ENCODE measurements at regions of chr1 and their contacts with region 1.

Region 1: DNA sequence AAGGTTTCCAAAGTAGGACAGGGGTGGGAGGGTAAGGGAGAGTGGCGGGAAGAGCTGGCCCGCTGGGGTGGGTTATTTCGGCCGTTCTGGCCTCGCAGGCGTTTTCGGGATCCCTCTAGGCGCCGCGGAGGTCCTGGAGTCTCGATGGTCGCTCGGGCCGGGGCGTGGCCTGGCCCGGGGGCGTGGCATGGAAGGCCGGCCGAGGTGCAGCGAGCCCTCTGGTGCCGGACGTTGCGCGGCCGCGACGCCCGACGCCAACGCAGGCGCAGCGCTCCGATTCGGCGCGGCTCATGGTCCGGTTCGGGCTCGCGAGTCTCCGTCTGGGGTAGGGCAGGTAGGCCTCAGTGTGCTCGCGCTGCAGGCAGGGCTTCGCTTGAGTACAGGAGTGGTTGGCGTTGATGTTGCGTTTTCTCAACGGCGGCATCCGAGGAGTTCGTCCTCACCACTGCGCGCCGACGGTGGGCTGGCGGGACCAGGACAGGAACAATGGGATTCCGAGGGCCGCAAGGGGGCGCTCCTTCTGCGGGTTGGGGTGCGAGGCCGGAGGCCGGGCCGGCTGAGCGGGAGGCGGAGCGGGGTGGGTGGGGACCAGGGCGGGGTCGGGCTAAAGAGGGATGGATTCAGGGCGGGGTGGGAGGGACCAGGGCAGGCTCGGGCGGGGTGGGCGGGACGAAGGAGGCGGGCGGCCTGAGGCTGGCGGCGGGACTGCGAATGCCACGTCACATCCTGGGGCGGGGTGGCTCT is at the start of gene PGBD2:
- DNase-seq: peak; percentile 95 to 98
- ATAC-seq: peak; percentile 99
- H3K4me3 ChIP-seq: peak within 1 kb of the TSS; percentile 44 to 61
- H3K27ac ChIP-seq: peak within 1 kb of the TSS in 1 of 2 donors; percentile 72
- H3K4me1 ChIP-seq: peaks cover 0 to 2% of the 10 kb centered on the region in 2 donors
- H3K27me3 ChIP-seq: no peaks in the 10 kb centered on the region
- total RNA-seq, gene PGBD2: 5.3 to 6.7 TPM

Region 2: DNA sequence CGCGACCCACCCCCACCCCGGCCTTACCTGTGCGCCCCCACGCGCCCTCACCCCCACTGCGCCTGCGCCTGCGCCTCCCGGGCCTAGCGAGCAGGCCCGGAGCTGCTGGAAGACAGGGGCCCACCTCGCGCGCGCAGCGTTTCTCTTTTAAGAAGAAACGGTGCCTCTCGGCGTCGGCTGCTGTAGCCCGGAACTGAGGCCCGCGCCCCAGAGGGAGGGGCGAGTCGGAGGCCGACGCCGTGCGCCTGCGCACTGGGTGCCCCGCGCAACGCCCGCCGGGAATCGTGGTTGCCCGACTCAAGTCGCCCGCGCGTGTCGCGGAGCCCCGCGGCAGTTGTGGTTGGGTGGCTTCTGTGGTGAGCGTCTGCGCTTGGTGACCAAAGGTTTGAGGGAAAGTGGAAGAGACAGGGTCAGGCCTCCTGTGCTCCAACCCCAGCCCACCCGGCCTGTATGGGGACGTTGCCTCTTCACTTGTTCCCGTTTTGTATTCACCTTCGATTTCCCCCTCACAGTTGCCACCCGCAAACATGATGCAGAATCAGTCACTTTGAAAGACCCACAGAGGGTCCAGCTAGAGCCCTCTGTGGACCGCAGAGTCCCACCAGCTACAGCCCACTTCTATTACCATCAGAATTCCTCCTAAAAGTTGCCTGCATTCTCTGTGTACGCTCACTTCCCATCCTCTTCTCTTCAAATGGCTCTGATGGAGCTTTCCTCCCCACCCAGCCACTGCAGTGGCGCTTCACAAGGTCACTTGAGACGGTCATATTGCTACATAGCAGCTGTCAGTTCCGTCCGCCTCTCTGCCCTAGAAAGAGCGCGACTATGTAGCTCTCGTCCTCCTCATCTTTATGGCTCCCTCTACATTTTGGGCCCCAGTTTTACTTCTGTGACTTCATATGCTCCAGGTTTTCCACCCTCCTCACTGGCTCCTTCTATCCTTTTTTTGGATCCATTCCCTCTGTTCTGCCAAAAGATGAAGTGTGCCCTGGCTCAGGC is 47.0 kb before region 1 on chr1 and contains the start of gene ZNF692:
- intact Hi-C with region 1: loop called in 1 of 2 experiments (anchors 2 kb)
- DNase-seq: peak; percentile 99
- ATAC-seq: peak; percentile 96
- H3K4me3 ChIP-seq: peak within 1 kb of the TSS; percentile 39 to 59
- H3K27ac ChIP-seq: peak within 1 kb of the TSS in 1 of 2 donors; percentile 77
- H3K4me1 ChIP-seq: peaks cover 0 to 3% of the 10 kb centered on the region in 2 donors
- H3K27me3 ChIP-seq: no peaks in the 10 kb centered on the region
- total RNA-seq, gene ZNF692: 20.7 to 41.3 TPM

Region 3: DNA sequence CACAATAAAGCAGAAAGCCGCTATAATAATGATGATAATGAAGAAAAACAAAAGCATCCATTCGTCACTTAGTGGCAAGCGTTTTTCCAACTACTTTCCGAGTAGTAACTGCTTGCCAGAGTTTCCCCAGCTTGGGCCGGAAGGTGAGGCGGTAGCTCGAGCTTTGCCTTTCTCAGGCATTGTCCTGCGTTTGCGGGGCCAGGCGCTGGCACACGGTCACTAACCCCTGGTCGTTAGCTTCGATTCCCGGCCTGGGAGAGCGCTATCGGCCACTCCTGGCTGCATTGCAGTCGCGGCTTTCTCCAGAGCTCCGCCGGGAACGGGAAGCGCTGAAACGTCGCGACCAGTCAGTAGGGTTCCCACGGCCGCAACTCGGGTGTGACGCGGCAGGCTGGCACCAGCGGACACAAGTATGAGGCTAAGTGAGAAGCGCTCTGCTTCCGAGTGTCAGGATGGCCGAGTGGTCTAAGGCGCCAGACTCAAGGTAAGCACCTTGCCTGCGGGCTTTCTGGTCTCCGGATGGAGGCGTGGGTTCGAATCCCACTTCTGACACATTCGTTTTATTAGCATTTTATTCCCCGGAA is 32.7 kb before region 1 on chr1:
- intact Hi-C with region 1: loop called in 1 of 2 experiments (anchors 2 kb)
- DNase-seq: peak; percentile 94 to 98
- ATAC-seq: peak; percentile 98
- H3K4me3 ChIP-seq: peak overlapping the region; percentile 28 to 49
- H3K27ac ChIP-seq: peak overlapping the region; percentile 74 to 94
- H3K4me1 ChIP-seq: no peaks in the 10 kb centered on the region
- H3K27me3 ChIP-seq: no peaks in the 10 kb centered on the region

Measured in aorta (tissue), 5 donors.